ENCODE measurements at regions of chr17 and their contacts with region 1.

Region 1: GRCh38 chr17:79707931-79708891 is 22.5 kb upstream of the ENPP7 start:
- DNase-seq: peak; percentile 80
- ATAC-seq: peak; percentile 65

Region 2: GRCh38 chr17:78925234-78925633 is 783.0 kb before region 1 on chr17 and contains the start of gene TIMP2:
- intact Hi-C with region 1: no loop called
- DNase-seq: peak; percentile 97
- ATAC-seq: peak; percentile 58
- total RNA-seq, gene TIMP2: 720 TPM

Region 3: GRCh38 chr17:79087428-79088143 is 620.6 kb before region 1 on chr17:
- intact Hi-C with region 1: loop called (anchors 10 kb)
- DNase-seq: peak; percentile 87
- ATAC-seq: peak; percentile 67

Region 4: DNA sequence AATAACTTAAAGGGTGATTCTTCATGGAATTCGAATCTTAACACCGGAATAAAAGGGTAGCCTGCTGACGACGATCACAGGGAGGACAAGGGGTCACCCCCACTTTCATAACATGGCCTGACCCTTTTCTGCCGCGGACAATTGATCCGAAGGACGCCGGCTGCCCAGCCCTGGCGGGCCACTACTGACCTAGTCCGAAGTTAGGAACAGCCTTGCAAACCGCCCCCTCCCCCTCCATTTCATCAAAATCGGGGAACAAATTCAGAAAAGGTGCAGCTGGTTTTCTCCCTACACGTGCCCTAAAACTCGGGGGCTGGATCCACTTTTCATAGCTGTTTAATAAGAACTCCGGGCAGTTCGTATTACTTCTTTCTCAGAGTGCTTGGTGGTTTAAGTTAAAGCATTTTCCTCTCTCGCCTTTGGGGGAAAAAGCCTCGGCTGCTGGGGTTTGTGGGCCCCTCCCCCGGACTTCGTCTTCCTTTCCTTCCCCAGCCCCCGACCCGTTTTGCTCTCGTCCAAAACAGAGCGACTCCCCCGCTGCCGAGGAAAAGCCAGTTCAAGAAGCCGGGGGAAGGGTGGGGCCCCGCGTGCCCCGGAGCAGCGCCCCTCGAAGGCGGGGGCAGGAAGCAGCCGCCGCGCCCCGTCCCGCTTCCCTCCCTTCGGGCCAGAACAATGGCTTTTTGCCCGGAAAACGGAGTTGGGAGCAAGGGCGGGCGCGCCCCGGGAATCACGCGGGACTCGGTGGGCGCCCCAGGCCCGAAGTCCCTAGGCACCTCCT is 69.1 kb after region 1 on chr17:
- intact Hi-C with region 1: no loop called
- DNase-seq: peak; percentile 81
- ATAC-seq: peak; percentile 71

Measured in sciatic nerve (tissue), 2 donors.